H1 (cell line): ENCODE measurements at regions of chr1 and their contacts with region 1.

Region 1: DNA sequence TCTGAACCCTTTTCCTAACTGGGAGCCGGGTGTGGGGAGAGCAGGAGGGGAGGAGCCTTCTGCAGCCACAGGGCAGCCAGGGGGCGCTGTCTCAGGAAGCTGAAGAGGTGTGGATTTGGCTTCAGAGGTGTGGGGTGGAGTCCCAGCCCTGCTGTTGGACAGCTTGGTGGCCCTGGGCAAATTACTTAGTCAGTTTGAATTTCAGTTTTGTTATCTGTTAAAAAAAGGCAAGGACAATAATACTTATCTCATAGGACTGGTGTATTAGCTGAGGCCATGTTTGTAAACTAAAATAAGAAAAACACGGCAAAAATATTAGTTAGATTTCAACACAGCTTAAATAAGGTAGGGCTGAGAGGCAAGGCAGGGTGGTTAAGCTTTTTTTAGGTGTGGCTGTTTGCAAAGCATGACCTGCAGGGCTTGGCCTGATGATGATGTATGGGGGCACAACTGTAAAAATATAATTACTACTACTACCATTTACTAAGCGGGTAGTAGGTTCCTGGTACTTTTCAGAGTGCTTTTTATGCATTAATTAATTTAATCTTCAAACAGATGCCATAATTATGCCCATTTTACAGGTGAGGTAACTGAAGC is 111.8 kb downstream of the PLXNA2 start:
- DNase-seq: peak; percentile 54 to 92
- H3K4me3 ChIP-seq: peak overlapping the region in 1 of 4 experiments; percentile 45; a peak in 3 of 8 replicates
- H3K27ac ChIP-seq: no peak overlapping the region
- H3K4me1 ChIP-seq: peaks cover 11 to 20% (median 15%) of the 10 kb centered on the region in 4 experiments
- H3K27me3 ChIP-seq: peaks cover 0 to 10% (median 4%) of the 10 kb centered on the region in 4 experiments; a peak in 2 of 7 replicates
- CTCF ChIP-seq: peak; percentile 85 to 90 (median 90)
- EP300 ChIP-seq: no peak
- POLR2A ChIP-seq: no peak
- RAD21 ChIP-seq: peak; percentile 63 to 69

Region 2: GRCh38 chr1:208065862-208066261 is 66.5 kb before region 1 on chr1:
- CTCF ChIA-PET with region 1: interaction called, 10 read pairs
- POLR2A ChIA-PET with region 1: no interaction called
- DNase-seq: no peak
- H3K4me3 ChIP-seq: no peak overlapping the region
- H3K27ac ChIP-seq: no peak overlapping the region
- H3K4me1 ChIP-seq: no peaks in the 10 kb centered on the region; a peak in 1 of 7 replicates
- H3K27me3 ChIP-seq: no peaks in the 10 kb centered on the region
- CTCF ChIP-seq: no peak
- EP300 ChIP-seq: no peak
- POLR2A ChIP-seq: no peak
- RAD21 ChIP-seq: no peak

Region 3: GRCh38 chr1:208115924-208116640 is 16.3 kb before region 1 on chr1:
- CTCF ChIA-PET with region 1: interaction called, 30 read pairs
- POLR2A ChIA-PET with region 1: interaction called, 4 read pairs
- DNase-seq: no peak
- H3K4me3 ChIP-seq: no peak overlapping the region
- H3K27ac ChIP-seq: no peak overlapping the region
- H3K4me1 ChIP-seq: peaks cover 0 to 7% (median 2%) of the 10 kb centered on the region in 4 experiments; a peak in 5 of 7 replicates
- H3K27me3 ChIP-seq: 0 out of 7 replicates have a peak, but pooled peaks cover 0 to 3% (median 0%) of the 10 kb centered on the region in 4 experiments
- CTCF ChIP-seq: no peak
- EP300 ChIP-seq: no peak
- POLR2A ChIP-seq: no peak
- RAD21 ChIP-seq: no peak

Region 4: GRCh38 chr1:208165659-208166058 is 33.3 kb after region 1 on chr1:
- CTCF ChIA-PET with region 1: interaction called, 29 read pairs
- POLR2A ChIA-PET with region 1: no interaction called
- DNase-seq: no peak
- H3K4me3 ChIP-seq: no peak overlapping the region
- H3K27ac ChIP-seq: no peak overlapping the region
- H3K4me1 ChIP-seq: peaks cover 5 to 21% (median 16%) of the 10 kb centered on the region in 4 experiments
- H3K27me3 ChIP-seq: no peaks in the 10 kb centered on the region
- CTCF ChIP-seq: no peak
- EP300 ChIP-seq: no peak
- POLR2A ChIP-seq: no peak
- RAD21 ChIP-seq: no peak

Region 5: DNA sequence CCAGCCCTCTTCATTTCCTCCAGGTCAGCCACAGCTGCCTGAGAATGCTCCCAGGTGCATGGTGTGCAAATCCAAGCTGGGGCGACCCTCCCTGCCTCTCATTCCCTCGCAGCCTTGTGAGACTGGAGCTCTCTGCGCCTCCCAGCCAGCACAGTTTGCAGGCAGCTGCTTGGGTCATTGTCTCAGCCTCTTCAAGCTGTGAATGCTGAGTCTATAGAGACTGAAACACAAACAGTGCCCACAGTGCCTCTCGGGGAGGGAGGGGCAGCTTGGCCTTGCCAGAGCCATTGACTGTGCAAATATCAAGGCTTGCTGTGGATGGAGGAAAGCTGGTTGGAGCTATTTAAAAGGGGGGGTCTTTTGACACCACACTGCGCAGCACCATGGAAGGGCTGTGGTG is 101.2 kb after region 1 on chr1:
- CTCF ChIA-PET with region 1: interaction called, 44 read pairs
- POLR2A ChIA-PET with region 1: interaction called, 4 read pairs
- DNase-seq: peak in 1 of 2 experiments; percentile 65
- H3K4me3 ChIP-seq: no peak overlapping the region
- H3K27ac ChIP-seq: no peak overlapping the region
- H3K4me1 ChIP-seq: peaks cover 4 to 32% (median 23%) of the 10 kb centered on the region in 4 experiments
- H3K27me3 ChIP-seq: no peaks in the 10 kb centered on the region
- CTCF ChIP-seq: no peak
- EP300 ChIP-seq: peak in 1 of 2 experiments; percentile 81; a peak in 1 of 3 replicates
- POLR2A ChIP-seq: no peak
- RAD21 ChIP-seq: peak in 1 of 2 experiments; percentile 23; a peak in 2 of 4 replicates

Region 6: DNA sequence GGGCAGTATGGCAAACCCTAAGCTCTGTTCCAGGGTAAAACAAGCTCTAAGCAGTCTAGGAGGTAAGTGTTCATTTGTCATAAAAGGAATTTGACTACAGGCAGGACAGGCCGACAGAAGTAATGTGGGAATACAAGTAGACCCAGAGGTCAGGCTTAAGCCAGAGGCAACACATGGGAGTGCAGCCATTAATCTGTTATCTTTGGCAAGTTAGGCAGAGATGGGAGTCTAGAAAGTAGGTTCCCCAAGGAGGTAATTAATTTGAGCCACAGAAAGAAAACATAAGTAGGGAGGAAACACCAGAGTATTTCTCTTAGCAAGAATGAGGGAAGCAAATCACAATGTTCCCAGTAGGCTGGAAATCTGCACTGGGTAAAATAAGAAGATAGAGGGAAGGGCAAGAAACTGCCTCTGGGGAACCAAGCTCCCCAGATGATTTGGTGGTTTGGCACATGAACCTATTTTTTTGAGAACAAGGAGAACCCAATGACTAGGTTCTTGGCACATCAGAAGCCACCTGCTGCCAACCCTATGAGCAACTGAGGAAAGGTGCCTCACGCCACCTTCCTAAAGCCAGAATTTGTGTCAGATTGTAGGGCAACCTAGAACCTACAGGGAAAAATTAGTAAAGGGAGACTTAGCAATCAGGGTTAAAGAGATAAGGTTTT is 748.2 kb after region 1 on chr1:
- CTCF ChIA-PET with region 1: no interaction called
- POLR2A ChIA-PET with region 1: no interaction called
- DNase-seq: no peak
- H3K4me3 ChIP-seq: no peak overlapping the region
- H3K27ac ChIP-seq: no peak overlapping the region
- H3K4me1 ChIP-seq: no peaks in the 10 kb centered on the region
- H3K27me3 ChIP-seq: no peaks in the 10 kb centered on the region
- CTCF ChIP-seq: no peak
- EP300 ChIP-seq: no peak
- POLR2A ChIP-seq: no peak
- RAD21 ChIP-seq: no peak